CD4-positive, alpha-beta T cell (primary cell): ENCODE measurements at regions of chr5 and their contacts with region 1.

Region 1: GRCh38 chr5:131263648-131264450 is at the start of gene CDC42SE2:
- DNase-seq: peak; percentile 72 to 95 (median 84)
- ATAC-seq: peak; percentile 86
- H3K4me3 ChIP-seq: peak within 1 kb of the TSS; percentile 97
- H3K4me3 Mint-ChIP-seq: peak within 1 kb of the TSS; percentile 94
- H3K27ac ChIP-seq: peak within 1 kb of the TSS; percentile 87 to 95
- H3K27ac Mint-ChIP-seq: peak within 1 kb of the TSS; percentile 99
- H3K4me1 ChIP-seq: peaks cover 35% of the 10 kb centered on the region
- H3K4me1 Mint-ChIP-seq: peaks cover 46% of the 10 kb centered on the region
- H3K27me3 ChIP-seq: no peaks in the 10 kb centered on the region
- H3K27me3 Mint-ChIP-seq: no peaks in the 10 kb centered on the region
- CTCF ChIP-seq: no peak
- total RNA-seq, gene CDC42SE2: 218 to 230 TPM

Region 2: GRCh38 chr5:129951039-129951438 is 1312.8 kb before region 1 on chr5:
- CTCF ChIA-PET with region 1: no interaction called
- POLR2A ChIA-PET with region 1: no interaction called
- intact Hi-C with region 1: no loop called
- DNase-seq: no peak
- ATAC-seq: no peak
- H3K4me3 ChIP-seq: no peak overlapping the region
- H3K4me3 Mint-ChIP-seq: no peak overlapping the region
- H3K27ac ChIP-seq: no peak overlapping the region
- H3K27ac Mint-ChIP-seq: no peak overlapping the region
- H3K4me1 ChIP-seq: no peaks in the 10 kb centered on the region
- H3K4me1 Mint-ChIP-seq: no peaks in the 10 kb centered on the region
- H3K27me3 ChIP-seq: no peaks in the 10 kb centered on the region
- H3K27me3 Mint-ChIP-seq: peaks cover 12% of the 10 kb centered on the region
- CTCF ChIP-seq: no peak

Region 3: DNA sequence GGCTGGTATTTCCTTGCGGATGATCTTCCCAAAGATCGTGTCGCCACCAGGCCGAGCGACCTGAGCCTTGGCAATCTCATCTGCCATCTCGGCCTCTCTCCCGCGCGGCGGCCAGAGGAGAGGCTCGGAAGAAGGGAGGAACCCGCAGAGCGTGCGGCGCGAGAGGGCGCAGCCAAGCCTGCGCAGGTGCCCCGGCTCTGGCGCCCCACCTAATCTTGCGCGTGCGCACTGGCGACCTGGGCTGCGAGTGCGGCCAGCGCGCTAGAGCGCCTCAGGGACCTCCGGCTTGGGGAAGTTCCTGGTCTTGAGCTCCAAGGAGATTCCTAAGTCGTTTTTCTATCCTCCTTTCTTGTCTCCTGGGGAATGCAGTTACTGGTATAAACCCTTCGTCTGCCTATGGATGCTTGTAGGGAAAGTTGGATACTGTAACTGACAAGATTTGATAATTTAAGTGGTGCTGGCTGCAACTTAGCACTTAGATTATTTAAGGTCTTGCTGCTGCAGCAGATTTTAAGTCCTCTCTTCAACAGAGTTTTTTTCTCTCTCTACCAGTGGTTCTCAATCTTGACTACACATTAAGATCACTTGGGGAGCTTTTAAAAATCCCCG is 98.6 kb before region 1 on chr5 and contains the start of gene HINT1:
- CTCF ChIA-PET with region 1: interaction called, 4 read pairs
- POLR2A ChIA-PET with region 1: interaction called, 69 read pairs
- intact Hi-C with region 1: loop called in 1 of 2 experiments (anchors 2 kb)
- DNase-seq: peak; percentile 81 to 97 (median 92)
- ATAC-seq: peak; percentile 84
- H3K4me3 ChIP-seq: peak within 1 kb of the TSS; percentile 86
- H3K4me3 Mint-ChIP-seq: peak within 1 kb of the TSS; percentile 97
- H3K27ac ChIP-seq: peak within 1 kb of the TSS; percentile 92 to 93
- H3K27ac Mint-ChIP-seq: peak within 1 kb of the TSS; percentile 88
- H3K4me1 ChIP-seq: peaks cover 28% of the 10 kb centered on the region
- H3K4me1 Mint-ChIP-seq: peaks cover 63% of the 10 kb centered on the region
- H3K27me3 ChIP-seq: no peaks in the 10 kb centered on the region
- H3K27me3 Mint-ChIP-seq: no peaks in the 10 kb centered on the region
- CTCF ChIP-seq: peak; percentile 37
- total RNA-seq, gene HINT1: 257 to 263 TPM

Region 4: GRCh38 chr5:131252824-131253171 is 11.1 kb before region 1 on chr5:
- CTCF ChIA-PET with region 1: interaction called, 48 read pairs
- POLR2A ChIA-PET with region 1: interaction called, 309 read pairs
- intact Hi-C with region 1: loop called in 1 of 2 experiments (anchors 1 kb)
- DNase-seq: peak; percentile 66 to 95 (median 74)
- ATAC-seq: peak; percentile 80
- H3K4me3 ChIP-seq: peak overlapping the region; percentile 79
- H3K4me3 Mint-ChIP-seq: peak overlapping the region; percentile 93
- H3K27ac ChIP-seq: peak overlapping the region; percentile 76 to 87
- H3K27ac Mint-ChIP-seq: peak overlapping the region; percentile 86
- H3K4me1 ChIP-seq: peaks cover 53% of the 10 kb centered on the region
- H3K4me1 Mint-ChIP-seq: peaks cover 71% of the 10 kb centered on the region
- H3K27me3 ChIP-seq: no peaks in the 10 kb centered on the region
- H3K27me3 Mint-ChIP-seq: no peaks in the 10 kb centered on the region
- CTCF ChIP-seq: no peak

Region 5: DNA sequence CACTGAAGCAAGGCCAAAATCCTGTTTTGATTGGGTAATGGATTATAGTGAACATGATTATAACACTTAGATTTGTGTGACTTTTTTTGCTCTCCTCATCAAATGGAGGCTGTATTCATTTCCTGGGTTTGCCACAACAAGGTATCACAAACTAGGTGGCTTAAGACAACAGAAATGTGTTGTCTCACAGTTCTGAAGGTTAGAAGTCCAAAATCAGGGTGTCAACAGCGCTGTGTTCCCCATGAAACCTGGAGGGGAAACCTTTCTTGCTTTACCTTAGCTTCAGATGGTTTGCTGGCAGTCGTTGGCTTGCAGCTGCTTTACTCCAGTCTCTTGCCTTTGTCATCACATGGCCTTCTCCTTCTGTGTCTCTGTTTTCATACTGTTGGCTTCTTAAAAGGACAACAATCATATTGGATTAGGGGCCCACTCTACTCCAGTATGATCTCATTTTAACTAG is 32.4 kb after region 1 on chr5:
- CTCF ChIA-PET with region 1: interaction called, 3 read pairs
- POLR2A ChIA-PET with region 1: interaction called, 19 read pairs
- intact Hi-C with region 1: loop called in 1 of 2 experiments (anchors 5 kb)
- DNase-seq: peak in 4 of 14 experiments; percentile 42 to 62 (median 52)
- ATAC-seq: peak; percentile 53
- H3K4me3 ChIP-seq: no peak overlapping the region
- H3K4me3 Mint-ChIP-seq: peak overlapping the region; percentile 74
- H3K27ac ChIP-seq: peak overlapping the region in 1 of 2 donors; percentile 23
- H3K27ac Mint-ChIP-seq: peak overlapping the region; percentile 74
- H3K4me1 ChIP-seq: peaks cover 68% of the 10 kb centered on the region
- H3K4me1 Mint-ChIP-seq: peaks cover 82% of the 10 kb centered on the region
- H3K27me3 ChIP-seq: no peaks in the 10 kb centered on the region
- H3K27me3 Mint-ChIP-seq: no peaks in the 10 kb centered on the region
- CTCF ChIP-seq: no peak

Region 6: DNA sequence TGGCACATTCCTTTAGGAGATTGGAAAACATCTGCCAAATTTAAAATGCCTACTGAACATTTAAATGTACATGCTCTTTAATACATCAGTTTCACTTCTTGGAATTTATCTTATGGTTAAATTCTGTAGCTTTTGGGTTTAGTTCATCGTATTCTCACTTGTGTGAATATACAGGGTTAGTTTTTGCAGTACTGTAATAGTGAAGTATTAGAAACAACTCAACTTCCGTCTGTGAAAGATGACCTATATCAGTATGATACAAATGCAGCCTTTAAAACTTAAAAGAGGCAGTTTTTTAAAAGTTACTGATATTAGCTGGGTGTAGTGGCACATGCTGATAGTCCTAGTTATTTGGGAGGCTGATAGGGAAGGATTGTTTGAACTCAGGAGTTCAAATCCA is 57.2 kb after region 1 on chr5:
- CTCF ChIA-PET with region 1: no interaction called
- POLR2A ChIA-PET with region 1: interaction called, 21 read pairs
- intact Hi-C with region 1: loop called in 1 of 2 experiments (anchors 5 kb)
- DNase-seq: no peak
- ATAC-seq: no peak
- H3K4me3 ChIP-seq: no peak overlapping the region
- H3K4me3 Mint-ChIP-seq: peak overlapping the region; percentile 4
- H3K27ac ChIP-seq: peak overlapping the region in 1 of 2 donors; percentile 4
- H3K27ac Mint-ChIP-seq: peak overlapping the region; percentile 13
- H3K4me1 ChIP-seq: peaks cover 37% of the 10 kb centered on the region
- H3K4me1 Mint-ChIP-seq: peaks cover 79% of the 10 kb centered on the region
- H3K27me3 ChIP-seq: no peaks in the 10 kb centered on the region
- H3K27me3 Mint-ChIP-seq: no peaks in the 10 kb centered on the region
- CTCF ChIP-seq: no peak

Region 7: GRCh38 chr5:131364507-131365050 is 100.7 kb after region 1 on chr5:
- CTCF ChIA-PET with region 1: interaction called, 5 read pairs
- POLR2A ChIA-PET with region 1: interaction called, 19 read pairs
- intact Hi-C with region 1: no loop called
- DNase-seq: peak in 4 of 14 experiments; percentile 43 to 70 (median 44)
- ATAC-seq: peak; percentile 76
- H3K4me3 ChIP-seq: no peak overlapping the region
- H3K4me3 Mint-ChIP-seq: peak overlapping the region; percentile 63
- H3K27ac ChIP-seq: peak overlapping the region; percentile 32 to 61
- H3K27ac Mint-ChIP-seq: peak overlapping the region; percentile 81
- H3K4me1 ChIP-seq: peaks cover 41% of the 10 kb centered on the region
- H3K4me1 Mint-ChIP-seq: peaks cover 89% of the 10 kb centered on the region
- H3K27me3 ChIP-seq: no peaks in the 10 kb centered on the region
- H3K27me3 Mint-ChIP-seq: no peaks in the 10 kb centered on the region
- CTCF ChIP-seq: no peak

Region 8: GRCh38 chr5:131417240-131417869 is 153.5 kb after region 1 on chr5:
- CTCF ChIA-PET with region 1: interaction called, 3 read pairs
- POLR2A ChIA-PET with region 1: interaction called, 11 read pairs
- intact Hi-C with region 1: no loop called
- DNase-seq: peak; percentile 73 to 93 (median 82)
- ATAC-seq: peak; percentile 30
- H3K4me3 ChIP-seq: no peak overlapping the region
- H3K4me3 Mint-ChIP-seq: peak overlapping the region; percentile 6
- H3K27ac ChIP-seq: no peak overlapping the region
- H3K27ac Mint-ChIP-seq: peak overlapping the region; percentile 70
- H3K4me1 ChIP-seq: peaks cover 18% of the 10 kb centered on the region
- H3K4me1 Mint-ChIP-seq: peaks cover 50% of the 10 kb centered on the region
- H3K27me3 ChIP-seq: no peaks in the 10 kb centered on the region
- H3K27me3 Mint-ChIP-seq: no peaks in the 10 kb centered on the region
- CTCF ChIP-seq: peak; percentile 92